Naive thymus-derived CD4-positive, alpha-beta T cell (primary cell): ENCODE measurements at regions of chr7 and their contacts with region 1.

Region 1: GRCh38 chr7:114922016-114922651 is at the start of gene MDFIC:
- DNase-seq: peak; percentile 42 to 84 (median 48)
- ATAC-seq: peak; percentile 73
- H3K4me3 ChIP-seq: peak within 1 kb of the TSS; percentile 80
- H3K4me3 Mint-ChIP-seq: peak within 1 kb of the TSS; percentile 85 to 99 (median 92)
- H3K27ac ChIP-seq: peak within 1 kb of the TSS; percentile 86
- H3K27ac Mint-ChIP-seq: peak within 1 kb of the TSS; percentile 86 to 97 (median 93)
- H3K4me1 ChIP-seq: peaks cover 15 to 21% of the 10 kb centered on the region in 2 donors
- H3K4me1 Mint-ChIP-seq: peaks cover 25 to 53% (median 46%) of the 10 kb centered on the region in 7 donors
- H3K27me3 ChIP-seq: no peaks in the 10 kb centered on the region
- H3K27me3 Mint-ChIP-seq: no peaks in the 10 kb centered on the region
- total RNA-seq, gene MDFIC: 48.5 to 84.5 (median 57.0) TPM

Region 2: DNA sequence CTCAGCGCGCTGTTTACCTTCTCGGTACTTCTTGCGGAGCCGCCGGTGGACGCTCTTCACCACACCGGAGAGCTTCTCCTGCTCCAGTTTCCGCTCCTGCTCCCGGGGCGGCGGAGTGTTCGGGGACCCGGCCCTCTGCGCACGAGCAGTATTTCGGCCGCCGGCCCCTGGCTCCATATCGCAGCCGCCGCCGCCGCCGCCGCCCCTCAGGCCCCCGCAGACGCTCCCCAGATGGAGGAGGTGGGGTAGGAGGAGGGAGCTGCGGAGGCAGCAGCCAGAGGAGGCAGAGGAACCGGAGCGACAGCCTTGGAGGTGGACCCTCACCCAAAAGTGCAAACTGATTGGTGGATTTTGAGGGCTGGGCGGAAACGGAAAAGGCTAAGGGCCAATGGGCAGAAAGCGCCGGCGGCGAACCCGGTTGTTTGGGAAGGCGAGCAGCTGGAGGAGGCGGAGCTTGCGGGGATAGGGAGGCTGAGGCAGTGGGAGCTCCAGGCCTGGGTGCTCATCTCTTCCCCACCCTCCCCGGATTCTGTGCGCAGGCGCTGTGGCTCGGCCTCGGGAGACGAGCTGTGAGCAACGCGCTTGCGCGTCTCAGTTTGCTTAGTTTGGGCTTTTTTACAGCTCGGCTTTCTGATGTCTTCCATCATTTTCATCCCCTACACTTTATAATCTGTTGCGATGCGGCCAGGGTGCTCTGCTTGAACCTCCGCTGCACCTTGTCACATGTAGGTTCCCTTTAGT is 1982.4 kb before region 1 on chr7:
- CTCF ChIA-PET with region 1: no interaction called
- POLR2A ChIA-PET with region 1: no interaction called
- intact Hi-C with region 1: loop called in 1 of 2 experiments (anchors 10 kb)
- DNase-seq: peak; percentile 97 to 100 (median 99)
- ATAC-seq: peak; percentile 98
- H3K4me3 ChIP-seq: peak overlapping the region; percentile 84
- H3K4me3 Mint-ChIP-seq: peak overlapping the region; percentile 88 to 97 (median 95)
- H3K27ac ChIP-seq: peak overlapping the region; percentile 76
- H3K27ac Mint-ChIP-seq: peak overlapping the region; percentile 89 to 97 (median 94)
- H3K4me1 ChIP-seq: peaks cover 19 to 29% of the 10 kb centered on the region in 2 donors
- H3K4me1 Mint-ChIP-seq: peaks cover 22 to 57% (median 52%) of the 10 kb centered on the region in 7 donors
- H3K27me3 ChIP-seq: no peaks in the 10 kb centered on the region
- H3K27me3 Mint-ChIP-seq: peaks cover 0 to 4% (median 0%) of the 10 kb centered on the region in 5 donors

Region 3: DNA sequence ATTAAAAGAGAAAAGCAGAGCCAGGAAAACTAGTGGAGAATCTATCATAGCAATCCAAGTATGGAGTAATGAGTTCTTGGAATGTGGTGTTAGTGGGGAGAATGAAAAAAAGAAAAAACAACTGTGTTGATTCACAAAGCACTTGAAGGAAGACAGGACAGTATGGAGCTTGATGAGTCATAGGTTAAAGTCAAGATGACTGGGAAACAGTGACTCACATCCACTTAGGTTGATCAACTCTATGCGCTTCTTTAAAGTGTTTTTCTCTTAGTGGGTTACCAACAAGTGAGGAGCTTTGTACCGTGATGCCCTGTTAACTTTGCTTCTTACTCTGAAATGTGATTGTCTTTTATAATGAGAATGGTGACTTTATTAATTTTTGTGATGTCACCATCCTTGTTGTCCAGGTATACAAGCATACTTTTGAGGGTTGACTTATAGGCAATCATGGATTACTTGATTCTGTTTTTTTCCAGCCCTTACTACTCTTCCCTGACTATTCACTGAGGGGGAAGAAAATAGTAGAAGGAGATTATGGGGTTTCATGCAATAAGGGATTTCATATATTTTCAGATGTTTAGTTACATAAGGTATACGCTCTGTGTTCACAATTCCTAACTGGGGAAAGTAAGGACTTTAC is 32.4 kb before region 1 on chr7:
- CTCF ChIA-PET with region 1: no interaction called
- POLR2A ChIA-PET with region 1: no interaction called
- intact Hi-C with region 1: loop called in 1 of 2 experiments (anchors 1 kb)
- DNase-seq: no peak
- ATAC-seq: peak; percentile 49
- H3K4me3 ChIP-seq: no peak overlapping the region
- H3K4me3 Mint-ChIP-seq: no peak overlapping the region
- H3K27ac ChIP-seq: no peak overlapping the region
- H3K27ac Mint-ChIP-seq: peak overlapping the region in 3 of 9 donors; percentile 33 to 67 (median 53)
- H3K4me1 ChIP-seq: no peaks in the 10 kb centered on the region
- H3K4me1 Mint-ChIP-seq: peaks cover 0 to 22% (median 0%) of the 10 kb centered on the region in 7 donors
- H3K27me3 ChIP-seq: peaks cover 0 to 2% of the 10 kb centered on the region in 2 donors
- H3K27me3 Mint-ChIP-seq: no peaks in the 10 kb centered on the region

Region 4: GRCh38 chr7:114979388-114979787 is 57.3 kb after region 1 on chr7:
- CTCF ChIA-PET with region 1: no interaction called
- POLR2A ChIA-PET with region 1: interaction called, 3 read pairs
- intact Hi-C with region 1: loop called (anchors 2 kb)
- DNase-seq: no peak
- ATAC-seq: no peak
- H3K4me3 ChIP-seq: no peak overlapping the region
- H3K4me3 Mint-ChIP-seq: peak overlapping the region in 2 of 10 donors; percentile 27 to 32
- H3K27ac ChIP-seq: no peak overlapping the region
- H3K27ac Mint-ChIP-seq: peak overlapping the region in 4 of 9 donors; percentile 34 to 59 (median 50)
- H3K4me1 ChIP-seq: peaks cover 0 to 11% of the 10 kb centered on the region in 2 donors
- H3K4me1 Mint-ChIP-seq: peaks cover 27 to 65% (median 55%) of the 10 kb centered on the region in 7 donors
- H3K27me3 ChIP-seq: no peaks in the 10 kb centered on the region
- H3K27me3 Mint-ChIP-seq: no peaks in the 10 kb centered on the region

Region 5: DNA sequence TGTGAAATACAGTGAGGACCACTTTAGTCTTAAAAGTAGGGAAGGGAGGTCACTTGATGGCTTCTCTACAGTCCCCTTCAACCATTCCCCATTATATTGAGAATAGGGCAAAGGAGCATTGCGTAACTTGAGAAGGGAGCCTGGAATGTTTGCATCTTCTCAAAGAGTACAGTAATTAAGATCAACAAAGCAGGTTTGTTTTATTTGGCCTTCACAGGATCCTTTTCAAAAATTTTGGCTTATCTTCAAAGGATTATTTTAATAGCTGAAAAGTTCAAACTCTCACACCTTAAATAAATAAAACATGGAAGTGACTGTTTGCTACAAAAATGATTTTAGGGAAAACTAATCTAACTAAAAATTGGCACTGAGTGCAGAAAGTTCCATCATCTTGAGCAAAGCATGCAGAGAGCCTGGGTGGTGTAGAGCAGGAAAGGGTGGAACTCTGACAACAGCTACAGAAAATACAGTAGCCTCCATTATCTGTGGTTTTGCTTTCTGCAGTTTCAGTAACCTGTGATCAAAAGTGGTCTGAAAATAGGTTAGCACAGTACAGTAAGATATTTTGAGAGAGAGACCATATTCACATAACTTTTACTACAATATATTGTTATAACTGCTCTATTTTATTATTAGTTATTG is 213.8 kb after region 1 on chr7:
- CTCF ChIA-PET with region 1: no interaction called
- POLR2A ChIA-PET with region 1: no interaction called
- intact Hi-C with region 1: loop called (anchors 5 kb)
- DNase-seq: peak in 4 of 9 donors; percentile 2 to 21 (median 8)
- ATAC-seq: peak; percentile 55
- H3K4me3 ChIP-seq: no peak overlapping the region
- H3K4me3 Mint-ChIP-seq: peak overlapping the region in 5 of 10 donors; percentile 15 to 54 (median 38)
- H3K27ac ChIP-seq: no peak overlapping the region
- H3K27ac Mint-ChIP-seq: peak overlapping the region in 4 of 9 donors; percentile 14 to 48 (median 24)
- H3K4me1 ChIP-seq: peaks cover 7 to 12% of the 10 kb centered on the region in 2 donors
- H3K4me1 Mint-ChIP-seq: peaks cover 14 to 35% (median 29%) of the 10 kb centered on the region in 7 donors
- H3K27me3 ChIP-seq: no peaks in the 10 kb centered on the region
- H3K27me3 Mint-ChIP-seq: peaks cover 0 to 6% (median 0%) of the 10 kb centered on the region in 5 donors

Region 6: DNA sequence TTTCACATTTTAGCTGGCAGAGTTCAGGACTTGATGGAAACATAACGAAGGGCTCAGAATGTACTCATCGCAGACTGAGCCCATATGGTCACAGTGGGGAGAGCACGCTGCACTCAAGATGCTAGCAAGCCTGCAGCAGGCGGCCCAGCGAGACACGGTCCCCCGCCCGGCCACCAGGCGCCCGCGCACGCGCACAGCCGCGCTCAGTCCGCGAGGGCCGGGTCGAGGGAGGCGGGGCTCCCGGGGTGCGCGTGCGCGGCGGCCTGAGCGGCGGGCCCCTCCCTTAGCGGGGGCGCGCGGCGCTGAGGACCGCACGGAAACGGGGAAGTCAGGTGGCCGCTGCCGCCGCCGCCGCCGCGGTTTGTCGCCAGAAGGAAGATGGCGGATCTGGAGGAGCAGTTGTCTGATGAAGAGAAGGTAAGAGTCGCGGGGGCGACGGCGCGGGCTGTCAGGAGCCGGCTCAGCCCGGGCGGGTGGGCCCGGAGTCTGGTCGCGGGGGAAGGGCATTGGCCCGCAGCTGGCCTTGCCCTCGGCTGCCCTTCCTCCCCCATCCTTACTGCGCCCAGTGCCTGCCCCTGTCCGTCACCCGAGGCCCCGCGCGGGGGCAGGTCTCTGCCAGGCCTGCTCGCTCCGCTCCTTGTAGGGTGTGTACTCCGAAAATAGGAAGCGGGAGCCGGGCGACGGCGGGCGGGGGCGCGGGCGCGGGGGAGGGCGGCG is 1940.3 kb after region 1 on chr7 and contains the start of gene CAPZA2:
- CTCF ChIA-PET with region 1: no interaction called
- POLR2A ChIA-PET with region 1: no interaction called
- intact Hi-C with region 1: loop called in 1 of 2 experiments (anchors 2 kb)
- DNase-seq: peak; percentile 89 to 99 (median 96)
- ATAC-seq: peak; percentile 96
- H3K4me3 ChIP-seq: peak within 1 kb of the TSS; percentile 73
- H3K4me3 Mint-ChIP-seq: peak within 1 kb of the TSS; percentile 94 to 99 (median 97)
- H3K27ac ChIP-seq: peak within 1 kb of the TSS; percentile 91
- H3K27ac Mint-ChIP-seq: peak within 1 kb of the TSS; percentile 91 to 99 (median 96)
- H3K4me1 ChIP-seq: peaks cover 11 to 28% of the 10 kb centered on the region in 2 donors
- H3K4me1 Mint-ChIP-seq: peaks cover 29 to 49% (median 46%) of the 10 kb centered on the region in 7 donors
- H3K27me3 ChIP-seq: no peaks in the 10 kb centered on the region
- H3K27me3 Mint-ChIP-seq: peaks cover 4 to 26% (median 8%) of the 10 kb centered on the region in 5 donors
- total RNA-seq, gene CAPZA2: 86.2 to 129 (median 111) TPM